Vagina (tissue), 2 donors: ENCODE measurements at regions of chr4 and their contacts with region 1.

Region 1: DNA sequence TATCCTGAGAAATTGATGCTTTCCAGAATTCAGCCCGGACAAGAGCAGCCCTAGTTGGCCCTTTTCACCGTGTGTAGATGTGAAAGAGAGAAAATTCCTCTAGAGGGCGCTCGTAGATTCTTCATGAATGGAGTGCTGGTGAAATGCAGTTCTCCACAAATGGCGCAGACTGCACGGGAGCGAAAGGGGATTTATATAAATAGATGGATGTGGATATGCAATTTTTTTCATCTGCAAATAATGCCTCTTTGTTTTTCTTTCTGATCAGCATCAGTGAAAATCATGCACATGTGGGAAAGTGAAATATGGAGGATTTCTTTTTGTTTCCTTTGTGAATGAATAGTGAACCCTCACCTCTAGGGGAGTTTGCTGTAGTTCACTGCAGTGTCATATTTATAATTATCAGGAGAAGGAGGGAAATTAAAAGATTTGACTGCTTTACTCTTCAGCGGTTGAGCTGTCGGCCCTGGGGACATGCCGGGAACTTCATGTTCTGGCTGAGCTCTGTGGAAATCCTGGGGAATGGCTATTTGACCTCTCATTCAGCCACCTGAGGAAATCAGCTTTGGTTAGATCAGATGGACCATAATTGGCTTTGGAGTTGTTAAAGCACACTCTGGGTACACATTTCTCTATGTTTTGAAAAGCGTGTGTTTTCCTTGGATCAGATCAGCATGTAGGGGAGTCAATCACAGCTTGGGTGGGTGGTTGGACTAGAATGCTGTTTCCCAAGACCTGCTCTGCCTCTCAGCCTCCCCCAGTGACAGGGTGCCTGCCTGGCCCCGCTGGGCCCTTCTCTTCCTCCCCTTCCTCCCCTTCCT is 115.0 kb upstream of the SHISA3 start:
- DNase-seq: no peak
- H3K4me3 ChIP-seq: no peak overlapping the region
- H3K27ac ChIP-seq: no peak overlapping the region
- H3K4me1 ChIP-seq: no peaks in the 10 kb centered on the region
- H3K27me3 ChIP-seq: no peaks in the 10 kb centered on the region
- CTCF ChIP-seq: peak in 2 of 3 experiments; percentile 26 to 49
- POLR2A ChIP-seq: no peak

Region 2: GRCh38 chr4:42519803-42520417 is 237.6 kb after region 1 on chr4:
- intact Hi-C with region 1: loop called (anchors 5 kb)
- DNase-seq: no peak
- H3K4me3 ChIP-seq: no peak overlapping the region
- H3K27ac ChIP-seq: no peak overlapping the region
- H3K4me1 ChIP-seq: no peaks in the 10 kb centered on the region
- H3K27me3 ChIP-seq: no peaks in the 10 kb centered on the region
- CTCF ChIP-seq: peak; percentile 40 to 66 (median 64)
- POLR2A ChIP-seq: no peak

Region 3: DNA sequence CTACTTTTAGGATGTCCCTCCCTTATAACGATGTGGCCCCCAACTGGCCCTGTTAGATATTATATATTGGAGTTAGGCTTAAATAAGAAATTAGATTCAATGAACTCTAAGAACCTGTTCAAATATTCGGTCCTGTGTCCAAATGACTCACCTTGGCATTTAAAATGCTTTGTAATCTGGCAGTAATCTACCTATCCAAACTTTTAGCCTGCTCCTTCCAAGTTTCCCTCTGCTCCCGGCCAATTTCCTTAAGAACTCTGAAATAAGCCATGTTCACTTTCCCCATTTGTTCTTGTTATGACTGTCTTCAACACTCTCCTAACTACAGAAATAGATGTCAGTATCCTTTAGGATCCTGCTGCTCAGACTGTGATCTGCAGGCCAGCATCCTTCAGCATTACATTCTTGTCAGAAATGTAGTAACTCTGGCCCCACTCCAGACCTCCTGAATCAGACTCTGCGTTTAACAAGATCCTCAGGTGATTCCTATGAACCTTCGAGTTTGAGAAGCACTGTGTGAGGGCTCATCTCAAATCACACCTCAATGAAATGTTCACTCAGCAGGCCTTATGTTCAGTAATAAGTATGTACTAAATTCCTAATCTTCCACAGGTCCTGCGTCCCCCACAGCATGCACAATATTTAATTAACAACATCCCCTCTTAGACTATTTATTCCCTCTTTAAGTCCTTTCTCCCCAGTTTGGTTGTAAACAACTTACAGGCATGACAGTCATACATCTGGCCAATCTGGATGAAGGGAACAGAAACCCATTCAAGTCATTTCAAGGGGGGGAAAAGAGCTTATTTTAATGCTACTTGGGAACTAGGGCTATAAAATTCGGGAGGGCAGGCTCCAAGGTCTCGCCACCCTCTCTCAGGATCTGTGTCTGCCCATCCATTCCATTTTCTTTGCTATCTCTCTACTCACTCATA is 371.6 kb after region 1 on chr4:
- intact Hi-C with region 1: no loop called
- DNase-seq: no peak
- H3K4me3 ChIP-seq: no peak overlapping the region
- H3K27ac ChIP-seq: no peak overlapping the region
- H3K4me1 ChIP-seq: peaks cover 28% of the 10 kb centered on the region
- H3K27me3 ChIP-seq: no peaks in the 10 kb centered on the region
- CTCF ChIP-seq: no peak
- POLR2A ChIP-seq: no peak